PC-9 (cell line): ENCODE measurements at regions of chr3 and their contacts with region 1.

Region 1: DNA sequence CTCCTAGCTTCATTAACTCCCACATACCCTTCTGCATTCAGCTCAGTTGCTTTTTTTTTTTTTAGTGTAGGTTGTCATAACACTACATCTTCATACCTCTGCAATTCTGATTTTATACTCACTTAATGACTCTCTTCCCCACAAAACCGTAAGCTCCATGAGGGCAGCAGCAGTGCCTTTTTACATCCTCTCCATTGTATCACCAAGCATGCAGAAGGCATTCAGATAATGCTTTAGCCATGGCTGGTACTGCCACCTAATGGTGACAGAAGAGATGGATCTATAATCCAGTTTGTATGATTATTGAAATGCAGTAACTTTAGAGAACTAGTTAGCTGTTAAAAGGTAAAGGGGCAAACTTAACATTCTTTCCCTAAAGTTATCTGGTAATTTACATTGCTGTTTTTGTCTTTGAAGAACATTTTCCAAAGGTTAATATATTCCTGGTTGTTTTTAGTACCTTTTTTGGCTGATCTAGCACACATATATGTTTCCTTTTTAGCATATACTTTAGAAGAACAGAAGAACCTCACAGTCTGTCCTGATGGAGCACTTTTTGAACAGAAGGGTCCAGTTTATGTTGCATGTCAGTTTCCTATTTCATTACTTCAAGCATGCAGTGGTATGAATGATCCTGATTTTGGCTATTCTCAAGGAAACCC is 36.8 kb downstream of the ATP1B3 start:
- DNase-seq: peak; percentile 40 to 48
- H3K4me3 ChIP-seq: no peak overlapping the region
- H3K27ac ChIP-seq: no peak overlapping the region
- H3K4me1 ChIP-seq: no peaks in the 10 kb centered on the region
- H3K27me3 ChIP-seq: no peaks in the 10 kb centered on the region
- CTCF ChIP-seq: peak; percentile 81

Region 2: GRCh38 chr3:141311496-141312353 is 601.6 kb before region 1 on chr3:
- CTCF ChIA-PET with region 1: no interaction called
- POLR2A ChIA-PET with region 1: no interaction called
- intact Hi-C with region 1: loop called (anchors 10 kb)
- DNase-seq: peak; percentile 89 to 99
- H3K4me3 ChIP-seq: peak overlapping the region; percentile 79
- H3K27ac ChIP-seq: no peak overlapping the region
- H3K4me1 ChIP-seq: peaks cover 7% of the 10 kb centered on the region
- H3K27me3 ChIP-seq: no peaks in the 10 kb centered on the region
- CTCF ChIP-seq: peak; percentile 73

Region 3: GRCh38 chr3:141575879-141576743 is 337.2 kb before region 1 on chr3:
- CTCF ChIA-PET with region 1: no interaction called
- POLR2A ChIA-PET with region 1: no interaction called
- intact Hi-C with region 1: loop called (anchors 2 kb)
- DNase-seq: no peak
- H3K4me3 ChIP-seq: no peak overlapping the region
- H3K27ac ChIP-seq: no peak overlapping the region
- H3K4me1 ChIP-seq: no peaks in the 10 kb centered on the region
- H3K27me3 ChIP-seq: no peaks in the 10 kb centered on the region
- CTCF ChIP-seq: peak; percentile 58

Region 4: DNA sequence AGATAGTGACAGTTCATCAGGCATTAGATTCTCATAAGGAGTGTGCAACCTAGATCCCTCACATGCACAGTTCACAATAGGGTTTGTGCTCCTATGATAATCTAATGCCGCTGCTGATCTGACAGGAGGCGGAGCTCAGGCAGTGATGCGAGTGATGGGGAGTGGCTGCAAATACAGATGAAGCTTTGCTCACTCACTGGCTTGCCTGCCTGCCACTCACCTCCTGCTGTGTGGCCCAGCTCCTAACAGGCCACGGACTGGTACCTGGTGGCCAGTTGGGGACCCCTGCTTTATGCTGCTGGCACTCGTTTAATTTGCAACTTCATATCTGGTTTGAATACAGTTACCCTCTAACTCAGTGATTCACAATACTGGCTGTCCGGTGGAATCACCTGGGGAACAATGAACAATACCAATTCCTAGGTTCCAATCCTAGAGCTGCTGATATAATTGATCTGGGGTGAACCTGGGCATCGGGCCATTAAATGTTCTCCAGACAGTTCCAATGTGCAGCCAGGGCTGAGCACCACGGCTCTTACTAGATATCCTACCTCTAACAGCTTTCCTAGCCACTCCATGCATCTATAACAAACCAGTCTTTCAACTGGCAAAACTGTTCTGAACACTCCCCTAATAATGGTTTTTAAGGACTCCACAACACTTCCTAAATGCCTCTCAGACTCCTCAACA is 94.6 kb after region 1 on chr3:
- CTCF ChIA-PET with region 1: no interaction called
- POLR2A ChIA-PET with region 1: no interaction called
- intact Hi-C with region 1: no loop called
- DNase-seq: no peak
- H3K4me3 ChIP-seq: no peak overlapping the region
- H3K27ac ChIP-seq: no peak overlapping the region
- H3K4me1 ChIP-seq: no peaks in the 10 kb centered on the region
- H3K27me3 ChIP-seq: no peaks in the 10 kb centered on the region
- CTCF ChIP-seq: no peak